Activated T-helper 1 cell treated with anti-CD3 and anti-CD28 coated beads, Interleukin-12 subunit alpha, Interleukin-12 subunit beta, Interleukin-2, Interleukin-4 antibody, amounts not matched to agents 30 ng/mL and 10 ng/mL and 1 ng/mL, durations not matched to agents 14 hours and 24 hours and 36 hours (primary cell): ENCODE measurements at regions of chr3 and their contacts with region 1.

Region 1: DNA sequence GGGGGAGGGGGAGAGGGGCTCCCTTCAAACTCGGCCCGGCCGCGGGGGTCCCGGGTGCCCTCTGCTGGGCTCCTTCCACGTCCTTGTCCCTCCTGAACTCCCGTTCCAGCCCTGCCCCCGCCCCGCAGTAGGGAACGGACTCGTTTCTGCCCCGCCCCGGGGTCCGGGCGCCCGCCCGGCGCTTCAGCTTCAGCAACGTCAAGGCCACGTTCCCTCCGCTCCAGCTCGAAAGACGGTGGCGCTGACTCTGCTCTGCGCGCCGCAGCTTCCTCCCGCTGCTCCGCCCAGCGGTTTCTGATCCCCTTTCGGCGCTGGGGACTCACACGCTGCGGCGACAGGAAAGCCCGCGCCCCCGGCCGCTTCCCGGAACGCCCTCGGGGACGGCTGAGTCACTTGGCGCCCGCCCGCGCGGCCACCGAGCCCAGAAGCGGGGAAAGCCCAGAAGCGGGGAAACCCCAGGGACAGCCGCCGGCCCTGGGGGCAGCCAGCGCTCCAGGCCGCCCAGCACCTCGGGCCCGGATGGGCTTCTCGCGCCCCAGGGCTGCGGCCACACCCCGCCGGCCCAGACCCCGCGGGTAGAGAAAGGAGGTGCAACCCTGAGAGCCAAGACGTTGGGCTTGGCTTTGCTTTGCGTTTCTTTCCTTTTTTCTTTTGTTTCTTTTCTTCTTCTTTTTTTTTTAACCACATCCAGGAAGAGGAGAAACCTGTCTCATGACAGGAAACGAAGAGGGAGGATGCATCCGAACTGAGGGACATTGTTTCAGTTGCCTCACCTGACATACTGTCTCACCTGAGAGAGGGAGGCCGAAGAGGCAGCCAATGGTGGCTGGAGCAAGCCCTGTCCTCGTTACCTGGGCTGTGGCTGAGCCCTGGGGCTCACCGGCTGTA is 28.9 kb downstream of the ARHGAP31 start:
- DNase-seq: peak; percentile 92
- H3K4me3 Mint-ChIP-seq: peak overlapping the region; percentile 80
- H3K27ac Mint-ChIP-seq: peak overlapping the region; percentile 92
- H3K4me1 Mint-ChIP-seq: peaks cover 52% of the 10 kb centered on the region
- H3K27me3 Mint-ChIP-seq: peaks cover 27% of the 10 kb centered on the region

Region 2: DNA sequence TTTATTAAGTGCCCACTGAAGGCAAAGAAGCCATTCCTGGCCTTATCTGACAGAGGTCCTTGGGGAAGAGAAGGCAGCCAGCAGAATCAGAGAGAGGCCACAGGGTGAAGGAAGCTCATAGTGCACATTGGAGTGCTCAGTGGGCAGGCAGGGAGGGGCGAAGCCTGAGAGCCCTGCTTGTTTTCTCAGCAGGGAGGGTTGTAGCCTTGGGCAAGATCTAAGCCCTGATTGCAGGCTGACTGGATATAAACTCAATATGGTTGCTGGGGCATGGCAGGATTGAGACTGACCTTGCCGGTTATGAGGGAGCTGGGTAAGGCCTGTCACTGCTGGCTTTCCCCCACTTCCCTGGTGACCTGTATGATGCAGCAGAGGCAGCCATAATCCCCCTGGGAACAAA is 280.9 kb before region 1 on chr3:
- intact Hi-C with region 1: no loop called
- DNase-seq: no peak
- H3K4me3 Mint-ChIP-seq: no peak overlapping the region
- H3K27ac Mint-ChIP-seq: no peak overlapping the region
- H3K4me1 Mint-ChIP-seq: no peaks in the 10 kb centered on the region
- H3K27me3 Mint-ChIP-seq: peaks cover 9% of the 10 kb centered on the region

Region 3: GRCh38 chr3:119279101-119279554 is 44.0 kb before region 1 on chr3:
- intact Hi-C with region 1: loop called (anchors 5 kb)
- DNase-seq: no peak
- H3K4me3 Mint-ChIP-seq: no peak overlapping the region
- H3K27ac Mint-ChIP-seq: no peak overlapping the region
- H3K4me1 Mint-ChIP-seq: peaks cover 5% of the 10 kb centered on the region
- H3K27me3 Mint-ChIP-seq: peaks cover 7% of the 10 kb centered on the region

Region 4: GRCh38 chr3:119352849-119353502 is 29.9 kb after region 1 on chr3:
- intact Hi-C with region 1: loop called (anchors 1 kb)
- DNase-seq: no peak
- H3K4me3 Mint-ChIP-seq: no peak overlapping the region
- H3K27ac Mint-ChIP-seq: no peak overlapping the region
- H3K4me1 Mint-ChIP-seq: peaks cover 19% of the 10 kb centered on the region
- H3K27me3 Mint-ChIP-seq: peaks cover 28% of the 10 kb centered on the region

Region 5: GRCh38 chr3:119463171-119464169 is 140.4 kb after region 1 on chr3 and contains the start of gene TMEM39A:
- intact Hi-C with region 1: loop called (anchors 1 kb)
- DNase-seq: peak; percentile 98
- H3K4me3 Mint-ChIP-seq: peak within 1 kb of the TSS; percentile 98
- H3K27ac Mint-ChIP-seq: peak within 1 kb of the TSS; percentile 97
- H3K4me1 Mint-ChIP-seq: peaks cover 49% of the 10 kb centered on the region
- H3K27me3 Mint-ChIP-seq: peaks cover 3% of the 10 kb centered on the region
- total RNA-seq, gene TMEM39A: 51.3 and 56.9 TPM in 2 replicates

Region 6: GRCh38 chr3:119508172-119508845 is 185.2 kb after region 1 on chr3:
- intact Hi-C with region 1: loop called (anchors 1 kb)
- DNase-seq: peak; percentile 31
- H3K4me3 Mint-ChIP-seq: peak overlapping the region; percentile 5
- H3K27ac Mint-ChIP-seq: peak overlapping the region; percentile 89
- H3K4me1 Mint-ChIP-seq: peaks cover 39% of the 10 kb centered on the region
- H3K27me3 Mint-ChIP-seq: no peaks in the 10 kb centered on the region

Region 7: GRCh38 chr3:119702530-119703157 is 379.6 kb after region 1 on chr3 and contains the start of gene CFAP91:
- intact Hi-C with region 1: loop called (anchors 1 kb)
- DNase-seq: peak; percentile 78
- H3K4me3 Mint-ChIP-seq: peak within 1 kb of the TSS; percentile 67
- H3K27ac Mint-ChIP-seq: no peak within 1 kb of the TSS
- H3K4me1 Mint-ChIP-seq: peaks cover 37% of the 10 kb centered on the region
- H3K27me3 Mint-ChIP-seq: peaks cover 29% of the 10 kb centered on the region
- total RNA-seq, gene CFAP91: 0.24 TPM in 1 of 2 replicates, not detected in the other